ENCODE measurements at regions of chr12 and their contacts with region 1.

Region 1: GRCh38 chr12:67943226-67943892 is 45.9 kb upstream of the IFNG-AS1 start:
- DNase-seq: peak; percentile 59 to 89 (median 74)
- H3K4me3 ChIP-seq: no peak overlapping the region
- H3K27ac ChIP-seq: no peak overlapping the region
- H3K4me1 ChIP-seq: no peaks in the 10 kb centered on the region
- H3K27me3 ChIP-seq: no peaks in the 10 kb centered on the region
- CTCF ChIP-seq: peak; percentile 49 to 87 (median 75)
- POLR2A ChIP-seq: no peak

Region 2: DNA sequence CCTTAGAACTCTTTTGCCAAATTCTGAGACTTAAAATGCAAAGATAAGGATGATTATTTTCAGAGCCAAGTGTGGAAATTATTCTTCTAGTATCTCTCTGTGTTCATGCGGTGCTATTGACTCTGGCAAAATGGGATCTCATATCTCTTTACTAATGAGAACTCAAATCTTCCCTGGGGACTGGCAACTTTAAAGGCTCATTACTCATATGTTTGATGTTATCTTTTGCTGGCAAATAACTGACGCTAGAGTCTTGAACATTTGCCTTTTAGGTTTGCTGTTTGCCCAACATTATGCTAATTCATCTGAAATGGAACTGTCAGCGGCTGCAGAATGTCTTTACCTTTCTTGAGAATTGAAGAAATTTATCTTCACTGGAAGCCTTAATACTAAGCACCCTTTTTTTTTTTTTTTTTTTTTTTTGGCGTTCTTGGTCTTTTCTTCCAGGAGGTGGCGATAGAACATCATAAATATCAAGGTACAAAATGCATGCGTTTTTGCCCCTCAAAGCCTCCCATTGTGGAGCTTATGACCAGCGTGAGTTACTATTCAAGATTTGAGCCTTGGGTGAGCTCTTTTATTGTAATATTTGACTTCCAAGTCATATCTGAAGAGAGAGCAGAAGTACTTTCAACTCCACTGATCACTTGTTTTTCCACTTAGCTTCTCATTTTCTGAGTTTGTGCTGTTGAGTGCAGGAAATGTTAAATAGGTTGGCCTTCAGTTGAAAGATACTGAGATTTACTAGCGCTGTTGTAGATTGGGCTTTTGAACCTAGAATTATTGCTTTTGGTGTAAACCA is 587.6 kb before region 1 on chr12:
- intact Hi-C with region 1: loop called in 1 of 2 experiments (anchors 5 kb)
- DNase-seq: peak in 5 of 7 donors; percentile 13 to 42 (median 31)
- H3K4me3 ChIP-seq: no peak overlapping the region
- H3K27ac ChIP-seq: peak overlapping the region in 3 of 5 donors; percentile 18 to 56 (median 37)
- H3K4me1 ChIP-seq: peaks cover 13 to 29% of the 10 kb centered on the region in 2 donors
- H3K27me3 ChIP-seq: no peaks in the 10 kb centered on the region
- CTCF ChIP-seq: peak; percentile 31 to 74 (median 56)
- POLR2A ChIP-seq: no peak

Region 3: DNA sequence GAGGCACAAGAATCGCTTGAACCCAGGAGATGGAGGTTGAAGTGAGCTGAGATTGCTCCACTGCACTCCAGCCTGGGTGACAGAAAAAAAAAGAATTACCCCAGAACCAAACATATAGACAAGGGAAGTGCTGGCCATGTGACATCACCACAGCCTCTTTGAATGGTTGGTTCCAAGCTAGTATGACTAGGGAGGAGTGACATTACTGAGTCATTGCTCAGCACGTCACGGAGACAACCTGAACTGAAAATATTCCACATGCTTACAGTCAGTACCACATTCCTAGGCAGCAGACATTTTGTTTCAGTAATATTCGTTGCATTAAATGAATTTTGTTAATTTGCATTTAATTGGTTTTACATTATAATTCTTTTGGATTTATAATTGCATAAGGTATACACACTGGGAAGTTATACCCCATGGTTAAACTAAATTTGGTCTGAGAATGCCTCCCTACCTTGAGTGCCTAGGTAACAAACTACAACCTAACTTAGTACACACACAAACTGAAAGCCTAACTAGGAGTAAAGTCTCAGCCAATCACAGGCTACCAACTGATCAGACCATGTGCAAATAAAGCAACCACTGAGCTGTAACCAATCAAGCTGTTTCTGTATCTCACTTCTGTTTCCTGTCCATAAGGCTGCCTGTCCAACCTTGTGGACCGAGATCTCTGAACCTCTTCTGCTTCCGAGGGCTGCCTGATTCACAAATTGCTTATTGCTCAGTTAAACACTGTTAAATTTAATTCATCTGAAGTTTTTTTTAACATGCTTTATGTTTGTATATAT is 509.8 kb before region 1 on chr12:
- intact Hi-C with region 1: loop called in 1 of 2 experiments (anchors 10 kb)
- DNase-seq: no peak
- H3K4me3 ChIP-seq: no peak overlapping the region
- H3K27ac ChIP-seq: no peak overlapping the region
- H3K4me1 ChIP-seq: peaks cover 0 to 5% of the 10 kb centered on the region in 2 donors
- H3K27me3 ChIP-seq: no peaks in the 10 kb centered on the region
- CTCF ChIP-seq: no peak
- POLR2A ChIP-seq: no peak

Region 4: DNA sequence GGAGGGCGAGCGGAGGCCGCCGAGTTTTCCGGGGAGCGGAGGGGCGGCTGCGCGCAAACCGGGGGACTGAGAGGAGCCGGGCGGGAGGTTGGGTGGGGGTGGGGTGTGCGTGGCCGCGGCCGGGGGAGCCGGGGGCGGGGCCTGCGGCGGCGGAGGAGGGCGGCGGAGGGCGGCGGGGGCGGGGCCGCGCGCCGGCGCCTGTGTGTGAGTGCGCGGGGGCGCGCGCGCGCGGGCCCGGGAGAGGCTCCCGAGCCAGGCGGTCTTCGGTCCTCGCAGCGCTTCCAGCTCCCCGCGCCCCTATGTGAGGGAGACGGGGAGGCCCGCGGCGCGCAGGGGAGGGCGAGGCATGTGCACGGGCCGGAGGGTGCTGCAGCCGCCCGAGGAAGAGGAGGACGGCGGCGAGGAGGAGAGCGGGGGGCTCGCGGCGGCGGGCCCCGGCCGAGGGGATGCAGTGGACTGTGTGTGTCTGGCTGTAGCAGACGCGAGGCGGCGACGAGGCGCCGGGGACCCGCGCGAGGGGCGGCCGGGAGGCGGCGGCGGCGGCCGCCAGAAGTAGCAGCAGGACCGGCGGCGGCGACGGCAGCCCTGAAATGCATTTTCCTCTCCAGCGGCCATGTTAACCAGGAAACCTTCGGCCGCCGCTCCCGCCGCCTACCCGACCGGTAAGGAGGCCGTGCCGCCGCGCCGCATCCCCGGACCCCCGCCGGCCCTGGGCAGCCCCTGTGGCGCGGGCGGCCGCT is 294.7 kb before region 1 on chr12 and contains the start of gene DYRK2:
- intact Hi-C with region 1: loop called in 1 of 2 experiments (anchors 10 kb)
- DNase-seq: peak; percentile 71 to 84 (median 80)
- H3K4me3 ChIP-seq: peak within 1 kb of the TSS; percentile 72 to 96 (median 84)
- H3K27ac ChIP-seq: peak within 1 kb of the TSS in 4 of 5 donors; percentile 85 to 95 (median 92)
- H3K4me1 ChIP-seq: peaks cover 14 to 38% of the 10 kb centered on the region in 2 donors
- H3K27me3 ChIP-seq: no peaks in the 10 kb centered on the region
- CTCF ChIP-seq: peak in 2 of 6 experiments; percentile 15 to 23
- POLR2A ChIP-seq: peak; percentile 65 to 81
- total RNA-seq, gene DYRK2: 8.2 to 22.4 (median 15.2) TPM

Region 5: GRCh38 chr12:67919406-67919805 is 24.0 kb before region 1 on chr12:
- intact Hi-C with region 1: no loop called
- DNase-seq: no peak
- H3K4me3 ChIP-seq: no peak overlapping the region
- H3K27ac ChIP-seq: no peak overlapping the region
- H3K4me1 ChIP-seq: no peaks in the 10 kb centered on the region
- H3K27me3 ChIP-seq: no peaks in the 10 kb centered on the region
- CTCF ChIP-seq: no peak
- POLR2A ChIP-seq: no peak

Measured in adrenal gland (tissue), 19 donors.